Activated CD4-positive, alpha-beta T cell treated with anti-CD3 and anti-CD28 coated beads for 36 hours (primary cell): ENCODE measurements at regions of chr13 and their contacts with region 1.

Region 1: GRCh38 chr13:46668302-46668720 is 115.3 kb downstream of the LRCH1 start:
- DNase-seq: peak; percentile 39
- ATAC-seq: peak; percentile 57
- H3K4me3 Mint-ChIP-seq: peak overlapping the region; percentile 67
- H3K27ac Mint-ChIP-seq: peak overlapping the region; percentile 91
- H3K4me1 Mint-ChIP-seq: peaks cover 44% of the 10 kb centered on the region
- H3K27me3 Mint-ChIP-seq: no peaks in the 10 kb centered on the region

Region 2: GRCh38 chr13:46593398-46593797 is 74.9 kb before region 1 on chr13:
- CTCF ChIA-PET with region 1: no interaction called
- POLR2A ChIA-PET with region 1: no interaction called
- intact Hi-C with region 1: loop called in 1 of 2 experiments (anchors 5 kb)
- DNase-seq: peak; percentile 79
- ATAC-seq: peak; percentile 96
- H3K4me3 Mint-ChIP-seq: peak overlapping the region; percentile 15
- H3K27ac Mint-ChIP-seq: peak overlapping the region; percentile 47
- H3K4me1 Mint-ChIP-seq: peaks cover 73% of the 10 kb centered on the region
- H3K27me3 Mint-ChIP-seq: no peaks in the 10 kb centered on the region

Region 3: DNA sequence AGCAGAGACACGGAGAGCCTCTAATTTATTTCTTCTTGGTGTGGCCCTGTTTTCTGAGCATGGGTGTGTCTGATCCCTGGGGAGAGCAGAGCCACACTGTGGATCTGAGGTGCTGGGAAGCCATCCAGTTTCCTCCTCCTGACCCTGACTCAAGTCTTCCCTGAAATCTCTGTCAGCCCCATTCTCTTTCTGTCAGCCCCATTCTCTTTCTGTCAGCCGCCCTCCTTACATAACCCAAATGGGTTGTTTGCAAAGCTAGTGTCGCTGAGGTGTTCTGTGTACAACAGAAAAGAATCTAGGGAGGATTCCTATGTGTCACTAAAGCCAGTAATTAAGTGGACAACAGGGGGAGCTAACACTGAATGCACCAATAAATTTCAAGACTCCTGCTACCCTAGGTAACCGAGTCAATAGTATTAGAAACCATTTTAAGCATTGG is 65.1 kb before region 1 on chr13:
- CTCF ChIA-PET with region 1: no interaction called
- POLR2A ChIA-PET with region 1: interaction called, 3 read pairs
- intact Hi-C with region 1: loop called (anchors 5 kb)
- DNase-seq: no peak
- ATAC-seq: no peak
- H3K4me3 Mint-ChIP-seq: no peak overlapping the region
- H3K27ac Mint-ChIP-seq: no peak overlapping the region
- H3K4me1 Mint-ChIP-seq: peaks cover 74% of the 10 kb centered on the region
- H3K27me3 Mint-ChIP-seq: no peaks in the 10 kb centered on the region

Region 4: GRCh38 chr13:46648166-46648635 is 20.1 kb before region 1 on chr13:
- CTCF ChIA-PET with region 1: interaction called, 3 read pairs
- POLR2A ChIA-PET with region 1: interaction called, 7 read pairs
- intact Hi-C with region 1: loop called in 1 of 2 experiments (anchors 2 kb)
- DNase-seq: peak; percentile 35
- ATAC-seq: peak; percentile 35
- H3K4me3 Mint-ChIP-seq: no peak overlapping the region
- H3K27ac Mint-ChIP-seq: no peak overlapping the region
- H3K4me1 Mint-ChIP-seq: peaks cover 33% of the 10 kb centered on the region
- H3K27me3 Mint-ChIP-seq: no peaks in the 10 kb centered on the region

Region 5: GRCh38 chr13:46655377-46656180 is 12.7 kb before region 1 on chr13:
- CTCF ChIA-PET with region 1: interaction called, 7 read pairs
- POLR2A ChIA-PET with region 1: interaction called, 3 read pairs
- intact Hi-C with region 1: loop called (anchors 1 to 2 kb)
- DNase-seq: no peak
- ATAC-seq: peak; percentile 50
- H3K4me3 Mint-ChIP-seq: no peak overlapping the region
- H3K27ac Mint-ChIP-seq: peak overlapping the region; percentile 42
- H3K4me1 Mint-ChIP-seq: peaks cover 36% of the 10 kb centered on the region
- H3K27me3 Mint-ChIP-seq: no peaks in the 10 kb centered on the region

Region 6: GRCh38 chr13:46679369-46680120 is 11.2 kb after region 1 on chr13:
- CTCF ChIA-PET with region 1: interaction called, 4 read pairs
- POLR2A ChIA-PET with region 1: interaction called, 3 read pairs
- intact Hi-C with region 1: loop called in 1 of 2 experiments (anchors 1 kb)
- DNase-seq: peak; percentile 50
- ATAC-seq: peak; percentile 95
- H3K4me3 Mint-ChIP-seq: no peak overlapping the region
- H3K27ac Mint-ChIP-seq: no peak overlapping the region
- H3K4me1 Mint-ChIP-seq: peaks cover 28% of the 10 kb centered on the region
- H3K27me3 Mint-ChIP-seq: no peaks in the 10 kb centered on the region